ENCODE measurements at regions of chr2 and their contacts with region 1.

Region 1: GRCh38 chr2:86615596-86615995 is 8.1 kb downstream of the RNF103 start:
- DNase-seq: no peak
- ATAC-seq: no peak
- H3K4me3 ChIP-seq: no peak overlapping the region
- H3K27ac ChIP-seq: no peak overlapping the region
- H3K4me1 ChIP-seq: no peaks in the 10 kb centered on the region; a peak in 1 of 4 replicates
- H3K27me3 ChIP-seq: no peaks in the 10 kb centered on the region
- CTCF ChIP-seq: no peak
- POLR2A ChIP-seq: no peak
- RAD21 ChIP-seq: no peak

Region 2: GRCh38 chr2:86221066-86221684 is 394.4 kb before region 1 on chr2:
- CTCF ChIA-PET with region 1: no interaction called
- POLR2A ChIA-PET with region 1: no interaction called
- RAD21 ChIA-PET with region 1: no interaction called
- intact Hi-C with region 1: no loop called
- DNase-seq: peak; percentile 27
- ATAC-seq: peak; percentile 88
- H3K4me3 ChIP-seq: no peak overlapping the region
- H3K27ac ChIP-seq: no peak overlapping the region
- H3K4me1 ChIP-seq: no peaks in the 10 kb centered on the region
- H3K27me3 ChIP-seq: no peaks in the 10 kb centered on the region
- CTCF ChIP-seq: peak; percentile 87 to 97 (median 87)
- POLR2A ChIP-seq: no peak
- RAD21 ChIP-seq: peak; percentile 84

Region 3: GRCh38 chr2:86592547-86593230 is 22.9 kb before region 1 on chr2:
- CTCF ChIA-PET with region 1: no interaction called
- POLR2A ChIA-PET with region 1: no interaction called
- RAD21 ChIA-PET with region 1: no interaction called
- intact Hi-C with region 1: loop called (anchors 1 kb)
- DNase-seq: no peak
- ATAC-seq: no peak
- H3K4me3 ChIP-seq: no peak overlapping the region
- H3K27ac ChIP-seq: no peak overlapping the region
- H3K4me1 ChIP-seq: no peaks in the 10 kb centered on the region
- H3K27me3 ChIP-seq: no peaks in the 10 kb centered on the region
- CTCF ChIP-seq: no peak
- POLR2A ChIP-seq: no peak
- RAD21 ChIP-seq: no peak

Region 4: GRCh38 chr2:86652116-86652515 is 36.5 kb after region 1 on chr2:
- CTCF ChIA-PET with region 1: no interaction called
- POLR2A ChIA-PET with region 1: no interaction called
- RAD21 ChIA-PET with region 1: no interaction called
- intact Hi-C with region 1: no loop called
- DNase-seq: no peak
- ATAC-seq: no peak
- H3K4me3 ChIP-seq: no peak overlapping the region
- H3K27ac ChIP-seq: no peak overlapping the region
- H3K4me1 ChIP-seq: no peaks in the 10 kb centered on the region
- H3K27me3 ChIP-seq: no peaks in the 10 kb centered on the region
- CTCF ChIP-seq: no peak
- POLR2A ChIP-seq: no peak
- RAD21 ChIP-seq: no peak

Region 5: DNA sequence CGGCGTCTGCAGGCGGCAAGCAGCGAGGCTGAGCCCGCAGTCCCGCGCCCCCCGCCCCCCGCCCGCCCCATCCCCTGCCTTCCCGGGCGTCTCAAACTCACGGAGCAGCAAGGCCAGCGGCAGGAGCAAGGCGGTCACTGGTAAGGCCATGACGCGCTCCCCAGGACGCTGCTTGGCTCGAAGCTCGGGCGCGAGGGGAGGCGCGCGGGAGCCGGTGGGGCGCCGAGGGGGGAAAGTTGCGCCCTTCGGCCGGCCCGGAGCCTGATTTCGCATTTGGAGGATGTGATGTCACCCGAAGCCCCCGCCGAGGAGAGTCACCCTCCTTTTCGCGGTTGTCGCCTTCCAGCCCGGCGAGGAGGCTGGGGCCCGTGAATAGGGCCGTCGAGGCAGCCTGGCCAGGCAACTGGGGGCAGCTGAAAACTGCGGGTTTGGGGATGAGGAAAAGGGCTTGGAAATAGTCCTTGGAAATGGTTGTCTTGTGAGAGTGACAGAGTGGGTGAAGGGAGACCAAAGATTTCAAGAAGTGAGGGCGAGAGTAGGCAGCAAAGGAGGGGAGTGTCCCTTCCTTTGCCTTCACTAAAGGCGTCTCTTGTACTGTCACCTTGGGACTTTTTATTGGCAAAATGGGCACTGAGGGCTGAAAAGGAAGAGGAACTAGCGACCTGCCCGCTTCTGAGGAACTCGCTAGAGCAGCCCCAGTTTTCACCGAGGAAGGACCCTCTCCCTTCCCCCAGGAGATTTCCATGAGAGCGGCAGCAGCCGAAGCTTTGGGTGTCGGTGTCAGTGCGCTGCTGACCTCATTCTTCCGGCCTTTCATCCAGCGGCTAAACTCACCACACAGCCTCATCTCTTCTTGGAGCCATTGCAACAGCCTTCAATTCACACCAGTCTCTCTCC is 175.3 kb after region 1 on chr2 and contains the start of gene CD8A:
- CTCF ChIA-PET with region 1: no interaction called
- POLR2A ChIA-PET with region 1: no interaction called
- RAD21 ChIA-PET with region 1: no interaction called
- intact Hi-C with region 1: no loop called
- DNase-seq: no peak
- ATAC-seq: no peak
- H3K4me3 ChIP-seq: no peak within 1 kb of the TSS
- H3K27ac ChIP-seq: no peak within 1 kb of the TSS
- H3K4me1 ChIP-seq: no peaks in the 10 kb centered on the region
- H3K27me3 ChIP-seq: no peaks in the 10 kb centered on the region
- CTCF ChIP-seq: no peak
- POLR2A ChIP-seq: no peak
- RAD21 ChIP-seq: no peak
- total RNA-seq, gene CD8A: 0.76 TPM